ENCODE measurements at regions of chr22 and their contacts with region 1.

Region 1: DNA sequence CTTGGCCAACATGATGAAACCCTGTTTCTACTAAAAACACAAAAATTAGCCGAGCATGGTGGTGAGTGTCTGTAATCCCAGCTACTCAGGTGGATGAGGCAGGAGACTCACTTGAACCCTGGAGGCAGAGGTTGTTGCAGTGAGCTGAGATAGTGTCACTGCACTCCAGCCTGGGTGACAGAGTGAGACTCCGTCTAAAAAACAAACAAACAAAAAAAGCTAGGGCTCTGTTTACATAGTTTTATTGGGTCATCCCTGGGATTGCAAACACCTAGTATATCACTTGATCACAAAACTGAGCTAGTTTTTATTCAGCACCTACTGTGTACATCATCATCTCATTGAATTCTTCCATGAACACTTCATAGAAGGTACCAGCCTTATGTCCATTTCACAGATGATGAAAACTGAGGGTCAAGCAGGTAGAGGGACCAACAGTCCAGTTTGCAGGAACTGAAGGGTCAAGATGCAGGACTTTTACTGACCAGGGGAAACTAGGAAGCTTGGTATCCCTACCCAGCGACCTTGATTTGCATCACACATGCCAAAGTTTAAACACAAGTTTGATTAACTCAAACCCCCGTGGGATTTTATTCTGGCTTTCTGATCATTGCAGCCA is 9.2 kb upstream of the MRTFA start:
- DNase-seq: no peak
- ATAC-seq: no peak
- H3K4me3 ChIP-seq: no peak overlapping the region
- H3K4me3 Mint-ChIP-seq: no peak overlapping the region
- H3K27ac ChIP-seq: no peak overlapping the region
- H3K27ac Mint-ChIP-seq: peak overlapping the region in 1 of 2 donors; percentile 54
- H3K4me1 ChIP-seq: peaks cover 4% of the 10 kb centered on the region
- H3K4me1 Mint-ChIP-seq: peaks cover 0 to 5% of the 10 kb centered on the region in 2 donors
- H3K27me3 ChIP-seq: no peaks in the 10 kb centered on the region
- H3K27me3 Mint-ChIP-seq: no peaks in the 10 kb centered on the region
- CTCF ChIP-seq: no peak

Region 2: GRCh38 chr22:40044102-40044869 is 601.4 kb before region 1 on chr22:
- intact Hi-C with region 1: no loop called
- DNase-seq: peak; percentile 98 to 99
- ATAC-seq: peak; percentile 82 to 92 (median 85)
- H3K4me3 ChIP-seq: peak overlapping the region; percentile 59
- H3K4me3 Mint-ChIP-seq: peak overlapping the region; percentile 97
- H3K27ac ChIP-seq: peak overlapping the region; percentile 87
- H3K27ac Mint-ChIP-seq: peak overlapping the region; percentile 97 to 99
- H3K4me1 ChIP-seq: peaks cover 21% of the 10 kb centered on the region
- H3K4me1 Mint-ChIP-seq: peaks cover 35 to 36% of the 10 kb centered on the region in 2 donors
- H3K27me3 ChIP-seq: no peaks in the 10 kb centered on the region
- H3K27me3 Mint-ChIP-seq: peaks cover 9 to 13% of the 10 kb centered on the region in 2 donors
- CTCF ChIP-seq: no peak

Region 3: DNA sequence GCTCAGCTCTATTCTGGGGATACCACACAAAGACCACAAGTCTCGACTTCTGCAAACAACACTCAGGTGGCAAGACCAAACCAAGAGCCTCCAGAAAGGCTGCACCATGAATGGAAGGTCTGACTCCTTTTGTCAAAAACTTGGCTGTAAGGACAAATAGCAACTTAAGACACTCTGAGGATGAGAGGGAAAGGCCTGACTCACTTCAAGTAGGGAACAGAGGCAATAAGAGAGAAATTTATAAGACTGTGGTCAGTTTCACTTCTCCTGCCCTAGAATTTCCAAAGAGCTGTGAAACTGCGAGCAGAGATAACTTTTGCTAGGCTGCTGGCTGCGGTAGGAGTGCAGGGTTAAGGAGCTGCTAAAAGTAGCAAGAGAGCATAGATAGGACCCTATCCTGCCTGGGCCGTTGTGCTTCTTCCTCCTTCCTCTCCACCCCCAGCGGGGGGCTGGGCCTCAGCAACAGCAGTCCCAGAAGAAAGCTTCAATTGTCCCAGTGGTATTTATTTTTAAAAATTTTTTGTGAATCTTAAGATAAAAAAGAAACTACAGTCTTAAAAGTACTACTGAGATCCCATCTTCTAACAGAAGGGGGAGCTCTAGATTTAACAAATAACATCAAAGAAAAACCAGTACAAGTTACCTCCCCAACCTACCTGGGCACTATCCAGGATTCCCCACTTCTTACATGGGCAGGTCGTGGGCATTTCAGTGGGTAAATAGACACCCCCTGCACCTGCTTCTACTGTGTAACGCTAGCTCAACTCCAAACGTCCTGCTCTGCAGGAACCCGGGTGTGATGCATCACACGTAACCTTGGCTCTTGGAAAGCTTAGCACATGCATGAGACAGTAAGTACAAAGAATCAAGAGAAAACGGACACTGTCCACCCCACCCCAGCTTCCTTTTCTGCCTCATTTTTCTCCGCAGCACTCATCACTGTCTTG is 208.9 kb before region 1 on chr22:
- intact Hi-C with region 1: loop called (anchors 1 kb)
- DNase-seq: peak in 1 of 2 donors; percentile 82
- ATAC-seq: peak; percentile 67 to 72 (median 70)
- H3K4me3 ChIP-seq: no peak overlapping the region
- H3K4me3 Mint-ChIP-seq: peak overlapping the region; percentile 65
- H3K27ac ChIP-seq: peak overlapping the region; percentile 45
- H3K27ac Mint-ChIP-seq: peak overlapping the region; percentile 85 to 86
- H3K4me1 ChIP-seq: peaks cover 53% of the 10 kb centered on the region
- H3K4me1 Mint-ChIP-seq: peaks cover 39 to 45% of the 10 kb centered on the region in 2 donors
- H3K27me3 ChIP-seq: no peaks in the 10 kb centered on the region
- H3K27me3 Mint-ChIP-seq: no peaks in the 10 kb centered on the region
- CTCF ChIP-seq: peak; percentile 74

Region 4: GRCh38 chr22:40525249-40525884 is 120.3 kb before region 1 on chr22:
- intact Hi-C with region 1: loop called (anchors 1 kb)
- DNase-seq: peak; percentile 56 to 86
- ATAC-seq: peak; percentile 64 to 79 (median 73)
- H3K4me3 ChIP-seq: no peak overlapping the region
- H3K4me3 Mint-ChIP-seq: no peak overlapping the region
- H3K27ac ChIP-seq: no peak overlapping the region
- H3K27ac Mint-ChIP-seq: peak overlapping the region in 1 of 2 donors; percentile 8
- H3K4me1 ChIP-seq: no peaks in the 10 kb centered on the region
- H3K4me1 Mint-ChIP-seq: peaks cover 0 to 22% of the 10 kb centered on the region in 2 donors
- H3K27me3 ChIP-seq: no peaks in the 10 kb centered on the region
- H3K27me3 Mint-ChIP-seq: no peaks in the 10 kb centered on the region
- CTCF ChIP-seq: peak; percentile 80

Region 5: DNA sequence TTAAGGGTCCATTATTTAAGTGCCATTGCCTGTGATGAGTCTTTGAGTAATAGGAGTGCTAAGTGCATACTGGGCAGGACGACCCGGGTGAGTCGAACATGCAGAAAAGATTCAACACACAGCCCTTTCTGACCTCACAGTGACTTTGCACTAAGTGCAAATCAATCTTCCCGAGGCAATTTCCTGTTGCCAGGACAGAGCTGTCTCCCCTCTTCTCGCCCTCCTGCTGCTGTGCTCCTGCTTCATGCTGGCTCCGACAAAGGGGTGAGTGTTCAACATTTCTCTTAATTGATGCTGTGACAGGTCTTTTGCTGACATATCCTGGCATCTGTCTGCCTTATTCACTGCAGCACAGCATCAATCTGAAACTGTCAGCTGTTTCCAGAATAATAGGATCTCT is 75.6 kb after region 1 on chr22:
- intact Hi-C with region 1: no loop called
- DNase-seq: no peak
- ATAC-seq: peak in 1 of 3 donors; percentile 35
- H3K4me3 ChIP-seq: no peak overlapping the region
- H3K4me3 Mint-ChIP-seq: no peak overlapping the region
- H3K27ac ChIP-seq: no peak overlapping the region
- H3K27ac Mint-ChIP-seq: no peak overlapping the region
- H3K4me1 ChIP-seq: no peaks in the 10 kb centered on the region
- H3K4me1 Mint-ChIP-seq: no peaks in the 10 kb centered on the region
- H3K27me3 ChIP-seq: no peaks in the 10 kb centered on the region
- H3K27me3 Mint-ChIP-seq: peaks cover 6 to 7% of the 10 kb centered on the region in 2 donors
- CTCF ChIP-seq: no peak